Naive thymus-derived CD4-positive, alpha-beta T cell (primary cell): ENCODE measurements at regions of chr1 and their contacts with region 1.

Region 1: GRCh38 chr1:90925928-90926869 is 95.6 kb downstream of the ZNF644 start:
- DNase-seq: no peak
- ATAC-seq: peak; percentile 54
- H3K4me3 ChIP-seq: no peak overlapping the region
- H3K4me3 Mint-ChIP-seq: peak overlapping the region in 9 of 10 donors; percentile 12 to 47 (median 21)
- H3K27ac ChIP-seq: no peak overlapping the region
- H3K27ac Mint-ChIP-seq: peak overlapping the region in 7 of 9 donors; percentile 3 to 52 (median 18)
- H3K4me1 ChIP-seq: peaks cover 11 to 23% of the 10 kb centered on the region in 2 donors
- H3K4me1 Mint-ChIP-seq: peaks cover 46 to 96% (median 90%) of the 10 kb centered on the region in 7 donors
- H3K27me3 ChIP-seq: no peaks in the 10 kb centered on the region
- H3K27me3 Mint-ChIP-seq: no peaks in the 10 kb centered on the region

Region 2: DNA sequence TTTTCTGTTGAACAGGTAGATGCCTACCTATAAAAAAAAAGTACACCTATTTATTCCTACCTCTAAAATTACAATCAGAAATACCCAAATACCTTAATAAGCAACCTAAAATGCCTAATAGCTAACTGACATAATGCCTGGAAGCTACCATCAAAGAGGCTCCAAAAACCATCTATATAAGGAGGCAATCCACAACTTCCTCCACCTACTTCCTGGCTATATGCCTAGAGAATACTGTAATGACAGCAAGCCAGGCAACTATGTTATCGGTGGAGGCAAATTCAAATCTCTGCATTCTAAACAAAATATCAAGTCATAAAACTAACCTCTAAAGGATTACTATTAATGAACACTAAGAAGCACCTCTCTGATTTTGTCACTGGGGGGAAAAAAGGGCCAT is 85.5 kb after region 1 on chr1:
- CTCF ChIA-PET with region 1: no interaction called
- POLR2A ChIA-PET with region 1: no interaction called
- intact Hi-C with region 1: loop called in 1 of 2 experiments (anchors 5 kb)
- DNase-seq: no peak
- ATAC-seq: no peak
- H3K4me3 ChIP-seq: no peak overlapping the region
- H3K4me3 Mint-ChIP-seq: peak overlapping the region in 8 of 10 donors; percentile 32 to 69 (median 49)
- H3K27ac ChIP-seq: no peak overlapping the region
- H3K27ac Mint-ChIP-seq: peak overlapping the region in 3 of 9 donors; percentile 9 to 44 (median 38)
- H3K4me1 ChIP-seq: peaks cover 21 to 28% of the 10 kb centered on the region in 2 donors
- H3K4me1 Mint-ChIP-seq: peaks cover 52 to 97% (median 87%) of the 10 kb centered on the region in 7 donors
- H3K27me3 ChIP-seq: no peaks in the 10 kb centered on the region
- H3K27me3 Mint-ChIP-seq: no peaks in the 10 kb centered on the region

Region 3: DNA sequence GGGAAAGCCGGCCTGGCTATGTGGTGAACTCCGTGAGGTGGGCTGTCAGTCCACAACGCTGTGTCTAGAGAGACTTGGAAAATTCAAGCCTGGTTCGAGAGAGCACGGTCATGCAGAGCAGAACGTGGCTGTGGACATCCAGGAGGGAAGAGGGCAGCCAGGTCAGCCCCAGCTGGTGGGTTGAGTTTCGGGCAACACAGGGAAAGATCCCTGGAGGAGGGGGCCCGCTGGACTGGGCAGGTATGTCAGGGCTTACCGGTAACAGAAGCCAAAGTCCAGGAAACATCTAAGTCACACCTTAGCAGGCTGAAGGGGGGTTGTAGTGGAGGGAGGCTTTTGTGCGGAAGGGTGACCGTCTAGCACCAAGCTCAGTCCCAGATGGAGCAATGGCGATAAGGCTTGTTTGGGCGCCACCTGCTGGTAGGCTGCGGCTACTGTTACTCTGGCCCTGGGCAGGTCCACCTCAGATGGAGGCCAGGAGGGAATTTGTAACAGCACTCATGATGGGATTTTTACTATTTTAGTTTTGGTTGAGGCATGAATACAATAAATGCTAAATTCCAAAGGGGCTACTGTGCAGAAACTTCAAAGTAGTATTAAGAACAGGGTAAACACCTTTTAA is 238.9 kb after region 1 on chr1:
- CTCF ChIA-PET with region 1: no interaction called
- POLR2A ChIA-PET with region 1: no interaction called
- intact Hi-C with region 1: no loop called
- DNase-seq: peak; percentile 5 to 72 (median 42)
- ATAC-seq: peak; percentile 78
- H3K4me3 ChIP-seq: no peak overlapping the region
- H3K4me3 Mint-ChIP-seq: no peak overlapping the region
- H3K27ac ChIP-seq: no peak overlapping the region
- H3K27ac Mint-ChIP-seq: peak overlapping the region in 1 of 9 donors; percentile 49
- H3K4me1 ChIP-seq: no peaks in the 10 kb centered on the region
- H3K4me1 Mint-ChIP-seq: peaks cover 0 to 6% (median 0%) of the 10 kb centered on the region in 7 donors
- H3K27me3 ChIP-seq: no peaks in the 10 kb centered on the region
- H3K27me3 Mint-ChIP-seq: peaks cover 0 to 8% (median 0%) of the 10 kb centered on the region in 5 donors